Heart left ventricle (tissue), 16 donors: ENCODE measurements at regions of chr1 and their contacts with region 1.

Region 1: DNA sequence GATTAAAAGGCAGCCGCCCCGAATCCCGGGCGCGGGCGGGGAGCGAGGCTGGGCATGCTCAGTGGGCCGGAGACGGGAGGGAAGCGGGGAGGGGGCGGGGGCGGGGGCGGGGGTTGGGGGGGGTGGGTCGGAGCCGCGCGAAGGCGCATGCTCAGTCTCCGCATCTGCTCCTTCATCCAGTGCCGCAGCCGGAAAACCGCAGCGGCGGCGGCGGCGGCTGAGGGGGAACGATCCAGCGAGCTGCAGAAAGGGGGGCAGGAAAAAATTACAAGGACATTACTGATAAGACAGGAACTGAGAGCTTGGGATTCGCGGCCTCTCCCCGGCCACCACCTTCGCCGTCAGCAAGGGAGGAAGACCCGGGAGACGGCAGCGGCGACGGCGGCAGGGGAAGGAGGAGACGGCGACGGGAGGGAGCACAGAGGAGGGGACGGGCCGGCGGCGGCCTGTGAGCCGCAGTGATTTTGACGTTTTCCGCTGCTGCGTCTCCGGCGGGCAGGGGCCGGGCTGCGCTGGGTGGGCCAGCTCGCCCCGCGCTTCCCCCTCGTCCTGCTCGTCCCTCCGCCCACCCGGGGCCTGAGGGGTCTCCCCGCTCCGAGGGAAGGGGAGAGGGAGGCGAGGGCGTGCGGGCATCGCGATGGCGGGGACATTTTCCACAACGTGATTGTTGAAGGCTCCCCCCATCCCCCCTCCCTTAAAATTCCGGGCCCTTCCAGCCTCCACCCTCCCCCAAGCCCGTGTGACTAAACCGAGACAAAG is at the start of gene CAMSAP2:
- DNase-seq: peak; percentile 92 to 94 (median 92)
- ATAC-seq: peak; percentile 91 to 95 (median 92)
- H3K4me3 ChIP-seq: peak within 1 kb of the TSS; percentile 46 to 98 (median 92)
- H3K27ac ChIP-seq: peak within 1 kb of the TSS; percentile 98 to 100 (median 100)
- H3K4me1 ChIP-seq: peaks cover 0 to 38% (median 30%) of the 10 kb centered on the region in 12 donors
- H3K27me3 ChIP-seq: no peaks in the 10 kb centered on the region
- CTCF ChIP-seq: no peak
- POLR2A ChIP-seq: peak in 1 of 2 donors; percentile 91
- total RNA-seq, gene CAMSAP2: 33.5 to 53.7 (median 37.5) TPM

Region 2: GRCh38 chr1:200654660-200655059 is 84.3 kb before region 1 on chr1:
- intact Hi-C with region 1: no loop called
- DNase-seq: no peak
- ATAC-seq: no peak
- H3K4me3 ChIP-seq: no peak overlapping the region
- H3K27ac ChIP-seq: no peak overlapping the region
- H3K4me1 ChIP-seq: no peaks in the 10 kb centered on the region
- H3K27me3 ChIP-seq: no peaks in the 10 kb centered on the region
- CTCF ChIP-seq: no peak
- POLR2A ChIP-seq: no peak

Region 3: DNA sequence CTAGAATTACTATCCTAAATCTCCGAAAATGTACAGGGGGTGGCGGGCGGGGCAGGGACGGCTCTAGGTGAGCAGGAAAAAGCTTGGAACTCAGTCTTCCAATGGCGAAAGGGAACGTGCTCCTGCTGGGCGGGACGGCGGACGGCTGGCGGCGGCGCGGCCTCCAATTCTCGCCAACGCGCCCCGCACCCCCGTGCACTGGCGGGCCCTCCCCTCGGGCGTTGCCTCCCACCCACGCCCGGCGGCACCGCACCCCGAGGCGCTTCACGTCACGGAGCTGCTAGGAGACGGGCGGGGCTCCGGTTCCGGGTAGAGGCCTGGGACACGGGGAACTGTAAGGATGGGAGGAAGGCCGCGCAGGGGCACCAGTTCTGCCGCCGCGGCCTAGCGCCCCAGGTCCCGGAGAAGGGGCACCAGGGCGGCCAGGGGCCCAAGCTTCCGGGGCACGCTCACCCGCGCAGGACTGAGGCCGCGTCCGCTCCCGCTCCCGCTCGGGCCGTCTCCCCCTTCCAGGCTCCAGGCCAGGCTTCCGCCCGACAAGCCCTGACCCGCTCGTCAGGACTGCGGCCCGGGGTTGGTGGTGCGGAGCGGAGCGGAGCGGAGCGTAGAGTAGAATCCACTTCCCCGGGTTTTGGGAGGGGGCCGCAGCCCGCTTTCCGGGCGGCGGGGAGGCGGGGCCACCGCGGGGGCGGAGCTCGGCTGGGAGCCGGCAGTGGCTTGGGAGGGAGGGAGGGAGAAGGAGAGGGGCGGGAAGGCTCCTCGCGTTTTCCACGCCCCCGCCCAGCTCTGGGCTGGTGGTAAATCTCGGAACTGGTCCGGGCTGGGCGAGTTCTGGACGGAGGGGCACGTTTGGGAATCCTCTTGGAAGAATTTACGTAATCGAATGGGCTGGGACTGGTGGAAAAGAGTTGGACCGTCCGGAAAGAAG is 69.3 kb before region 1 on chr1 and contains the start of gene DDX59:
- intact Hi-C with region 1: loop called in 9 of 10 experiments (anchors 1 to 5 kb)
- DNase-seq: peak; percentile 95 to 98 (median 97)
- ATAC-seq: peak; percentile 94 to 96 (median 95)
- H3K4me3 ChIP-seq: peak within 1 kb of the TSS; percentile 58 to 97 (median 85)
- H3K27ac ChIP-seq: peak within 1 kb of the TSS; percentile 98 to 100 (median 100)
- H3K4me1 ChIP-seq: peaks cover 0 to 45% (median 29%) of the 10 kb centered on the region in 12 donors
- H3K27me3 ChIP-seq: no peaks in the 10 kb centered on the region
- CTCF ChIP-seq: no peak
- POLR2A ChIP-seq: peak; percentile 73 to 93
- total RNA-seq, gene DDX59: 12.9 to 21.6 (median 15.9) TPM

Region 4: DNA sequence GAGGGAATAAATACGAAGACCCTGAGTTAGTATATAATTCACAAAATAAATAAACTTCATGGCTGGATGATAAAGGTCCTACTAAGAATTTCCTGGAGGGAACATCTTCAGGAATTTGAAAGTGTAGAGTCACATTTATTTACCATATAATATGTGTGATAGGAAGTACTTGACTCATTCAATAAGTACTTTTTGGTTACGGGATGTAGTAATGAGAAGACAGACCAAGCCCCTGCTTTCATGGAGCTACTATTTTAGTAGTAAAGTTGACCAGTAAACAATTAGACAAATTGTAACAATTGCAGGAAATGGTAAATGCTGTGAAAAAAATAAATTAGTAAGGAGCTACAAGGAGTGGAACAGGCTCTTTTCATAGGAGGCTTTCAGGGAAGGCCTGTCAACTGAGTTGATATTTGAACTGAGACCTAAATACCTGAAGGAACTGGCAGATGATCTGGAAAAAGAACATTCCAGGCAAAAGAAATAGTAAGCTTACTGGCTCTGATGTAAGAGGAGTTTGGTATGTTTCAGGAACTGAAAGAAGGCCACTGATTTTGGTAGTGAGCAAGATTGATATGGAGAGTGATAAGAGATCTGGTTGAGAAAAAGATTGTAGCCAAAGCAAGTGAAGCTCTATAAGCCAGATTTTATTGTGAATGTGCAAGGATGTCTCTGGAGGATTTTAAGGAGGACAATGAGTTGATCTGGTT is 36.0 kb after region 1 on chr1:
- intact Hi-C with region 1: loop called in 3 of 10 experiments (anchors 5 kb)
- DNase-seq: no peak
- ATAC-seq: peak in 2 of 4 donors; percentile 7 to 32
- H3K4me3 ChIP-seq: no peak overlapping the region
- H3K27ac ChIP-seq: peak overlapping the region in 9 of 12 donors; percentile 1 to 44 (median 32)
- H3K4me1 ChIP-seq: peaks cover 0 to 57% (median 32%) of the 10 kb centered on the region in 12 donors
- H3K27me3 ChIP-seq: no peaks in the 10 kb centered on the region
- CTCF ChIP-seq: no peak
- POLR2A ChIP-seq: no peak

Region 5: DNA sequence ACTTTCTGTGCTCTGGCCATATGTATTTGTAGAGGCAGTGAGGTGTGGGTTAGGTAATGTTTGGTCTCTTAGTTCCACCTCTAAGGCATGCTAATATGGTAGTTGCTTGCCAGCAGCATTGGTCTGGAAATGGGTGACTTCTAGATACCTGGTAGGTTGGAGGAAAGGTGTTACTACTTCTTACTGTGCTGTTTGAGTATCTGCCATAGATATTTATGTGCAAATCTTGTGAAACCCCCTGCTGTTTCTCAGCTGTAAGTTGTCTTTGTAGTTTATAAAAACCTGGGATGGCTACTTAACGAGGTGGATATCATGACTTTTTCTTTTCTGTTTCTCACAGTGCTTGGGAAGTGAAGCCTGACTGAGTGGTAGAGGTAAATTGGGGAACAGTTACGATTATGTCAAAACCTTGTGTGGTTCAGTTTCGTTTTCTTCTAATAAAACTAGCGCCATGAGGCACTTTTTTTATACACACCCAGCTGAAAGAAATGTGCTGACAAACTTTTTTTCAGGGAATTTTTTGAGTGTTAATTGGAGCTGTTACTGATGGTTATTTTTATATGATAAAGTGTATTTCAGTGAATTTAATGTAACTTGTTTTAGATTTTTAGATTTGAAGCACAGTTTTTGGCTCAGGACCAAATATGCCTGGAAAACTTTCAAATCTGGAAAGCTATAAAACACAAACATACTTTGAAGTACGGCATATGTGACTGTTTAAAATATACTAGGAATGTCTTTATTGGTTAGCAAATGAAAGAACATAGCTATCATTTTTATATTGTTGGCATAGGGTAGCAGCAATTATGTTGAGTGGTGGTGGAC is 41.8 kb after region 1 on chr1:
- intact Hi-C with region 1: loop called in 3 of 10 experiments (anchors 5 kb)
- DNase-seq: no peak
- ATAC-seq: no peak
- H3K4me3 ChIP-seq: peak overlapping the region in 7 of 12 donors; percentile 3 to 44 (median 22)
- H3K27ac ChIP-seq: peak overlapping the region in 7 of 12 donors; percentile 3 to 66 (median 14)
- H3K4me1 ChIP-seq: peaks cover 0 to 51% (median 31%) of the 10 kb centered on the region in 12 donors
- H3K27me3 ChIP-seq: no peaks in the 10 kb centered on the region
- CTCF ChIP-seq: no peak
- POLR2A ChIP-seq: no peak

Region 6: DNA sequence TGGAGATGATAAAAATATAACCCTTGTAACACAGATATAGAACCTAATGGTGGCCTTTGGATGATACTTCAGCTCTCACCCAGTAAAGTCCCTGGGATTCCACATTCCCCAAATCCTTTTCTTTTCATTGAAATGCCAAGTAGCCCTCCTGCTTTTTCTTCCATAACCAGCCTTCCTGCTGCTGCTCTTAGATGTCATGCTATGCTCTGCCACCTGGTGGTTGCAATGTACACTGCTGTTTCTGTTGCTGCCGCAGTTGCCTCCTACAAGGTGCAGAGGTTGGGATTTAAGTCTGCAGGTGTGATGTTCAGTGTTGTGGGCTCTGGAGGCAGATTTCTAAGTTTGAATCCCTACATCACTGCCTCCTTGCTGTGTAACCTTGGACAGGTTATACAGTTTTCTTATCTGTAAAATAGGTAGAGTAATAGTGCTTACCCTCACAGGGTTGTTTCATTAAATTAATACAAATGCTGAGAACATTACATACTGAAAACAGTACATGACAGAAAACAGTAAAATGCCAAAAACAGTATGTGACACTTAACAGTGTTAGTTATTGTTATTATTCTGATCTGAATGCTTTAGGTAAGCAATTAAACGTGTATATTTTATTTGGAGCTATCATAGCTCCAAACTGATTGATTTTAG is 64.1 kb after region 1 on chr1:
- intact Hi-C with region 1: loop called in 6 of 10 experiments (anchors 5 to 10 kb)
- DNase-seq: peak in 4 of 5 donors; percentile 65 to 78 (median 73)
- ATAC-seq: peak; percentile 64 to 90 (median 86)
- H3K4me3 ChIP-seq: no peak overlapping the region
- H3K27ac ChIP-seq: no peak overlapping the region
- H3K4me1 ChIP-seq: peaks cover 0 to 16% (median 2%) of the 10 kb centered on the region in 12 donors
- H3K27me3 ChIP-seq: no peaks in the 10 kb centered on the region
- CTCF ChIP-seq: peak; percentile 89 to 97 (median 93)
- POLR2A ChIP-seq: no peak

Region 7: DNA sequence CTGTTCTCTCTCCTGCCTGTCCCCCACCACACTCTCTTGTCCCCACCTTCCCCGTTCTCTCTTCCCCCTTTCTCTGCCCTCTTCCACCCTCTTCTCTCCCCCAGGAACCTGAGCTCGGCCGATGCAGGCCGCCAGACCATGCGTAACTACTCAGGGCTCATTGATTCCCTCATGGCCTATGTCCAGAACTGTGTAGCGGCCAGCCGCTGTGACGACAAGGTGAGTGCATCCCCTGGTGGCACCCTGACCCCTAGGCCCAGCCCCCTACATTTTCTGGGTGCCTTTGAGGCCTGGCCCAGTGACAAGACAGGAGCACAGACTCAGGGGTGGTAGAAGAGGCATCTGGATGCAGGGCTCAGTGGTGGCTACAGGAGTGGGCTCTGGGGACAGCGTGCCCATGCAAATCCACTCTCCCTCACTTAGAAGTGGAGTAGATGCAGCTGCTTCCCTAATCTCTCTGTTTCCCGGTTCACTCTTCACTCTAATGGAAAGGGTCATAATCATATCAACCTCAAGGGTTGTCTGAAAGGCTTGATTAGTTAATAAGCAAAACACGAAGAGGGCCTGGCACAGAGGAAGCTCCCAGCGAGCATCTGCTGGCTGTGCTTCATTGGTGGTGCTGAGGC is 581.4 kb after region 1 on chr1:
- intact Hi-C with region 1: no loop called
- DNase-seq: no peak
- ATAC-seq: no peak
- H3K4me3 ChIP-seq: no peak overlapping the region
- H3K27ac ChIP-seq: no peak overlapping the region
- H3K4me1 ChIP-seq: no peaks in the 10 kb centered on the region
- H3K27me3 ChIP-seq: no peaks in the 10 kb centered on the region
- CTCF ChIP-seq: no peak
- POLR2A ChIP-seq: no peak